Ascending aorta (tissue), 2 donors: ENCODE measurements at regions of chrX and their contacts with region 1.

Region 1: DNA sequence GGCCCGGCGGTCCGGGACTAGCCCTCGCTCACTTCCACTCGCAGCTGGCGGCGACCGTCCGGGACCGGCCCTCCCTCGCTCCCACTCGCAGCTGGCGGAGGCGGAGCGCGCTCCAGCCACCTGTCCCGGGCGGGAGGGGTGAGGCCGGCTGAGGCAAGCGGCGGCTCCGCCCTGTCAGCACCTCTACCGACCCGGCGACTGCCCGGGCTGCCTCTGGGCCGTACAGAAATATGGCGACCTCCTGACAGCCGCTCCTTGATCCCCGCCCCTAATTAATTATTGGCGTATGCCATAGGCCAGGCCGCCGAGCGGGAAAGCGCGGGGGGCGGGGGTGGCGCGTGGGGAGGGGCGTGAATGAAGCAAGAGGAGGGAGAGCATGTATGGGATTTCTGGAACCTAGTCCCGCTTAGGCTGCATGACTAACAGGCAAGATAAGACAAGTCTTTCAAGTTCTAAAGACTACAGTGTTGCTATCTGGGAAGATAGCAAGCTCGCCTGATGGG is at the start of gene MORC4:
- DNase-seq: peak; percentile 43 to 88
- H3K4me3 ChIP-seq: peak within 1 kb of the TSS; percentile 50 to 71
- H3K27ac ChIP-seq: peak within 1 kb of the TSS; percentile 73 to 75
- H3K4me1 ChIP-seq: no peaks in the 10 kb centered on the region
- H3K27me3 ChIP-seq: no peaks in the 10 kb centered on the region
- CTCF ChIP-seq: no peak
- total RNA-seq, gene MORC4: 7.1 TPM

Region 2: GRCh38 chrX:107118322-107119147 is 118.5 kb after region 1 on chrX and contains the start of gene RBM41:
- intact Hi-C with region 1: loop called (anchors 10 kb)
- DNase-seq: peak; percentile 48 to 80
- H3K4me3 ChIP-seq: peak within 1 kb of the TSS; percentile 60 to 66
- H3K27ac ChIP-seq: peak within 1 kb of the TSS; percentile 8 to 42
- H3K4me1 ChIP-seq: no peaks in the 10 kb centered on the region
- H3K27me3 ChIP-seq: no peaks in the 10 kb centered on the region
- CTCF ChIP-seq: no peak
- total RNA-seq, gene RBM41: 4.6 TPM

Region 3: GRCh38 chrX:107348051-107348450 is 348.0 kb after region 1 on chrX:
- intact Hi-C with region 1: no loop called
- DNase-seq: no peak
- H3K4me3 ChIP-seq: no peak overlapping the region
- H3K27ac ChIP-seq: no peak overlapping the region
- H3K4me1 ChIP-seq: no peaks in the 10 kb centered on the region
- H3K27me3 ChIP-seq: no peaks in the 10 kb centered on the region
- CTCF ChIP-seq: no peak

Region 4: DNA sequence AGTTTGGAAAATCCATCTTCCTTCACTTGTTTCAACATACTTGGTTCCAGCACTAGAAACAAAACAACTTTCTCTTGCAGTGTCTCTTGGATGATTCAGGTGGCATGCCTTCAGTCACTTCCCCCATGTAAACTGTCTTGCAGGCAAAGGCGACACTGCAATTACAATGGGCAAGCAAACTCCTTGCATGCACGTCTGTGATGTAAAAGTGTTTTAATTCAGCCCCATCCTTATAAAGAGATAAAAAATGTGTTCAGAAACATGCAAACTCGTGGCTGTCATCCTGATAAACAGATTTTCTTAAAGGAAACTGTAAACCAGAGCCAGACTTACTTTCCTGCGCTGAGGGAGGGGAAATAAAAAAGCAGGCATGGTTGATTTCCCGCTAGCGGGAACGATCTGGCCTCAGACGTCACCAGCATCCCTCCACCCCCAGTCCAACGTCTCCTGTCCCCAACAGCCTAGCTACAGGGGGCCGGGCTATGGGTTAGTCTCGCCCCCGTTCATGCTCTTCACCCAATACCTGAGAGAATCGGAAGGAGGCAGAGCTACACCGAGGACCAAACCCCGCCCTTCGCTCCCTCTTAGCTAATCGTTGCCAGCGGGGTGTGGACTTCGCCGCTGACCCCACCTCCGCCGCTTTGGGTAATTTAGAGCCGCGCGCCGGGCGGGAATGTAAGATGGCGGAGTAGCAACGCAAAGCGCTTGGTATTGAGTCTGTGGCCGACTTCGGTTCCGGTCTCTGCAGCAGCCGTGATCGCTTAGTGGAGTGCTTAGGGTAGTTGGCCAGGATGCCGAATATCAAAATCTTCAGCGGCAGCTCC is 628.0 kb after region 1 on chrX and contains the start of gene PRPS1:
- intact Hi-C with region 1: loop called (anchors 5 kb)
- DNase-seq: peak; percentile 77 to 96
- H3K4me3 ChIP-seq: peak within 1 kb of the TSS; percentile 47 to 74
- H3K27ac ChIP-seq: peak within 1 kb of the TSS; percentile 77 to 86
- H3K4me1 ChIP-seq: no peaks in the 10 kb centered on the region
- H3K27me3 ChIP-seq: no peaks in the 10 kb centered on the region
- CTCF ChIP-seq: no peak
- total RNA-seq, gene PRPS1: 14.0 TPM